CD8-positive, alpha-beta memory T cell (primary cell): ENCODE measurements at regions of chr2 and their contacts with region 1.

Region 1: DNA sequence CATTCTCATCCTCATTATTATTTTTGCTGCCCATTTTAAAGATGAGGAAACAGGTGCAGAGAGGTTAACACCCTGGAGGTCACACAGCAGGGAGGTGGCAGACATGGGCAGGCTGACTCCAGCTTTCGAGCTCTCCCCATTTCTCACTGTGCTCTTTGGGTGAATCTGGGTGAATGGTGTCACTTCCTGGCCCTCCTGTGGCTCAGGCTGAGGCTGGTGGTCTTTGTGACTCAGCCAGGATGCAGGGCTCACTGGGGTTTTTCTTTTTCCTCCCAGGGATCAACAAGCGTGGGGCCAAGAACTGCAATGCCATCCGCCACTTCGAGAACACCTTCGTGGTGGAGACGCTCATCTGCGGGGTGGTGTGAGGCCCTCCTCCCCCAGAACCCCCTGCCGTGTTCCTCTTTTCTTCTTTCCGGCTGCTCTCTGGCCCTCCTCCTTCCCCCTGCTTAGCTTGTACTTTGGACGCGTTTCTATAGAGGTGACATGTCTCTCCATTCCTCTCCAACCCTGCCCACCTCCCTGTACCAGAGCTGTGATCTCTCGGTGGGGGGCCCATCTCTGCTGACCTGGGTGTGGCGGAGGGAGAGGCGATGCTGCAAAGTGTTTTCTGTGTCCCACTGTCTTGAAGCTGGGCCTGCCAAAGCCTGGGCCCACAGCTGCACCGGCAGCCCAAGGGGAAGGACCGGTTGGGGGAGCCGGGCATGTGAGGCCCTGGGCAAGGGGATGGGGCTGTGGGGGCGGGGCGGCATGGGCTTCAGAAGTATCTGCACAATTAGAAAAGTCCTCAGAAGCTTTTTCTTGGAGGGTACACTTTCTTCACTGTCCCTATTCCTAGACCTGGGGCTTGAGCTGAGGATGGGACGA is 13.2 kb downstream of the ITM2C start:
- DNase-seq: peak; percentile 51 to 90 (median 67)
- H3K4me3 ChIP-seq: peak overlapping the region; percentile 32
- H3K4me3 Mint-ChIP-seq: peak overlapping the region; percentile 75 to 84 (median 78)
- H3K27ac ChIP-seq: no peak overlapping the region
- H3K27ac Mint-ChIP-seq: peak overlapping the region; percentile 83 to 97 (median 94)
- H3K4me1 ChIP-seq: peaks cover 21% of the 10 kb centered on the region
- H3K4me1 Mint-ChIP-seq: peaks cover 31 to 59% (median 31%) of the 10 kb centered on the region in 3 donors
- H3K27me3 ChIP-seq: no peaks in the 10 kb centered on the region
- H3K27me3 Mint-ChIP-seq: peaks cover 0 to 2% of the 10 kb centered on the region in 2 donors

Region 2: DNA sequence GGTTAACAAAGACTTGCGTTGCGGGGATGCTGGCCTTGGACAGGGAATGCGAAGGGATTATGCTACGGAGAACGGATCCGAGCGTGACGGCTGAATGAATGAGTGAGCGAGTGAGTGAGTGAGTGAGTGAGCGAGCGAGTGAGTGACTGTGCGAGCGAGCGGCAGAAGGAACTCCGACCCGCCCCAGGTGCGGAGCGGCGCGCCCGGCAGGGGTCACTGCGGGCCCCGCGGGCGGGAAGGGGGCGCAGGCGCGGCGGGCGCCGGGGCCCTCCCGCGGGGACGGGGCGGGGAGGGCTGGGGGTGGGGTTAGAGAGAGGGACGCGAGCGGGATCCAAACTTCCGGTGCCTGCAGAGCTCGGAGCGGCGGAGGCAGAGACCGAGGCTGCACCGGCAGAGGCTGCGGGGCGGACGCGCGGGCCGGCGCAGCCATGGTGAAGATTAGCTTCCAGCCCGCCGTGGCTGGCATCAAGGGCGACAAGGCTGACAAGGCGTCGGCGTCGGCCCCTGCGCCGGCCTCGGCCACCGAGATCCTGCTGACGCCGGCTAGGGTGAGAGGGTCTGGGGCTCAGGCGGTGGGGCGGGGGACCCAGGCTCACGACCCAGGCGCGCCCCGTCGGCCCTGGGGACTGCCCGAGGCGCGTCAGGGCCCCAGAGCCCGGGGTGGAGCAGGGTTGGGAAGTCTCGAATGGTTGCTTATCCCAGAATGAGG is 13.2 kb before region 1 on chr2 and contains the start of gene ITM2C:
- CTCF ChIA-PET with region 1: interaction called, 44 read pairs
- POLR2A ChIA-PET with region 1: interaction called, 20 read pairs
- DNase-seq: peak; percentile 63 to 82 (median 72)
- H3K4me3 ChIP-seq: peak within 1 kb of the TSS; percentile 65
- H3K4me3 Mint-ChIP-seq: peak within 1 kb of the TSS; percentile 91 to 95 (median 94)
- H3K27ac ChIP-seq: peak within 1 kb of the TSS; percentile 24
- H3K27ac Mint-ChIP-seq: peak within 1 kb of the TSS; percentile 81 to 98 (median 88)
- H3K4me1 ChIP-seq: peaks cover 41% of the 10 kb centered on the region
- H3K4me1 Mint-ChIP-seq: peaks cover 40 to 79% (median 49%) of the 10 kb centered on the region in 3 donors
- H3K27me3 ChIP-seq: no peaks in the 10 kb centered on the region
- H3K27me3 Mint-ChIP-seq: peaks cover 3 to 6% of the 10 kb centered on the region in 2 donors
- total RNA-seq, gene ITM2C: 56.1 to 58.6 TPM

Region 3: GRCh38 chr2:230902180-230902899 is 24.4 kb after region 1 on chr2:
- CTCF ChIA-PET with region 1: interaction called, 15 read pairs
- POLR2A ChIA-PET with region 1: no interaction called
- DNase-seq: peak in 4 of 5 donors; percentile 27 to 67 (median 48)
- H3K4me3 ChIP-seq: no peak overlapping the region
- H3K4me3 Mint-ChIP-seq: no peak overlapping the region
- H3K27ac ChIP-seq: no peak overlapping the region
- H3K27ac Mint-ChIP-seq: no peak overlapping the region
- H3K4me1 ChIP-seq: peaks cover 18% of the 10 kb centered on the region
- H3K4me1 Mint-ChIP-seq: peaks cover 16 to 38% (median 28%) of the 10 kb centered on the region in 3 donors
- H3K27me3 ChIP-seq: no peaks in the 10 kb centered on the region
- H3K27me3 Mint-ChIP-seq: peaks cover 3 to 7% of the 10 kb centered on the region in 2 donors

Region 4: GRCh38 chr2:231662028-231662810 is 784.3 kb after region 1 on chr2:
- CTCF ChIA-PET with region 1: no interaction called
- POLR2A ChIA-PET with region 1: no interaction called
- DNase-seq: peak; percentile 94 to 99 (median 97)
- H3K4me3 ChIP-seq: peak overlapping the region; percentile 69
- H3K4me3 Mint-ChIP-seq: peak overlapping the region; percentile 74 to 88 (median 81)
- H3K27ac ChIP-seq: peak overlapping the region; percentile 83
- H3K27ac Mint-ChIP-seq: peak overlapping the region; percentile 92 to 97 (median 96)
- H3K4me1 ChIP-seq: peaks cover 11% of the 10 kb centered on the region
- H3K4me1 Mint-ChIP-seq: peaks cover 7 to 15% (median 12%) of the 10 kb centered on the region in 3 donors
- H3K27me3 ChIP-seq: no peaks in the 10 kb centered on the region
- H3K27me3 Mint-ChIP-seq: peaks cover 0 to 3% of the 10 kb centered on the region in 2 donors